Endothelial cell of umbilical vein (primary cell): ENCODE measurements at regions of chr6 and their contacts with region 1.

Region 1: DNA sequence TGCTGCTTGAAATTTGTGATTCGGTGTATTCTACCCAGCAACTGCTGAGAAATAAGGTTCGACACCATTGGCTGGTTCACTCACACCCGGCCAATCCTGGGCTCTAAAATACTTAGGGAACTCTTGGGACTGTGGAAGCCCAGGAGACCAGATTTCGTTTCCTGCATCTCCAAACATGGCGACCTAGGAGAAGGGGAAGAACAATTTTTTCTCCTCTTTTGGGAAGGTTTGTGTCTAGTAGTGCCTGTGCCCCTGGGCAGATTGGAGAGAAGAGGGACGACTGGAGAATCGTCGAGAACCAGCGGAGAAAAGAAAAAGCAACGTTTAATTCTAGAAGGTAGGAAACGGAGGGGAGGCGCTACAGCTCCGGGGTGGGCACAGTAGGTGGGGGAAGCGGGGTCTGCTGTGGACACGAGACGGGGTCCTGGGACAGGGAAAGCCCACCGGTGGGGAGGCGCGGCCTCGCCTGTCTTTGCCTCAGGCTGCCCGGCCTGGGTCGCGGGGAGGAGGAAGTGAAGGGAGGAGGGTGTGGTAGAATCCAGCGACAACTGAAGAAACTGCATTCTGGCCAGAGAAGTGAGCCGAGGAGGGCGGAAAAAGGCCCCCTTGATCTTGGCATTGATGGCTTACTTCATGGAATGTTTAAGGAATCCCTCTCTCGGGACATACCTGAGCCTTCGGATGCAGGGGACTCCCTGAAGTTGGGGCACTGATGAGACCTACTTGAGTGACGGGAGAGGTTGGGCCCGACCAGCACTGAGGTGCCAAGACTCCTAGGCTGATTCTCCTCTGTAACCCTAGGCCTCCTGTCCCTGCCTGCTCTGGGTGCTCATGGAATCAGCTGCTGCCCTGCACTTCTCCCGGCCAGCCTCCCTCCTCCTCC is at the start of gene BTN2A1:
- DNase-seq: peak; percentile 97
- H3K4me3 ChIP-seq: peak within 1 kb of the TSS; percentile 92 to 99 (median 99)
- H3K27ac ChIP-seq: peak within 1 kb of the TSS; percentile 92
- H3K4me1 ChIP-seq: peaks cover 20% of the 10 kb centered on the region
- H3K27me3 ChIP-seq: no peaks in the 10 kb centered on the region
- CTCF ChIP-seq: no peak
- POLR2A ChIP-seq: peak; percentile 18
- total RNA-seq, gene BTN2A1: 23.4 and 25.1 TPM in 2 replicates

Region 2: DNA sequence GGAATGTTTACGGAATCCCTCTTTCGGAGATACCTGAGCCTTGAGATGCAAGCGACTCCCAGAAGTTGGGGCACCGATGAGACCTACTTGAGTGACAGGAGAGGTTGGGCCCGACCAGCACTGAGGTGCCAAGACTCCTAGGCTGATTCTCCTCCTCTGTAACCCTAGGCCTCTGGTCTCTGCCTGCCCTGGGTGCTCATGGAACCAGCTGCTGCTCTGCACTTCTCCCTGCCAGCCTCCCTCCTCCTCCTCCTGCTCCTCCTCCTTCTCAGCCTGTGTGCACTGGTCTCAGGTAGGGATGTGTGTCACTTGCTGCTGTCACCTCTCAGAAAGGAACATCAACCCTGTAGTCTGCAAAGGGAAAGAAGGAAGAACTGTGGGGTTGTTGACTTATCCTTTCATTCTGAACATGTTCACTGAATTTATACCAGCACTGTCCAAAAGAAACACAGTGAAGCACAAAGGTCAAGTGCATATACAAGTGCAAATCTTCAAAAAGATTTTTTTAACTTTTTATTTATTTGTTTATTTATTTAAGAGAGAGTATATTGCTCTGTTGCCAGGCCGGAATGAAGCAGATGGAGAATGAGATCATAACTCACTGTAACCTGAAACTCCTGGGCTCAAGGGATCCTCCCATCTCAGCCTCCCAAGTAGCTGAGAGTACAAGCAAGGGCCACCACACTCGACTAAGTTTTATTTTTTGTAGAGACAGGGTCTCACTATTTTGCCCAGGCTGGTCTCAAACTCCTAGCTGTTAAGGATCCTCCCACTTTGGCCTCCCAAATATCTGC is 74.2 kb before region 1 on chr6:
- CTCF ChIA-PET with region 1: no interaction called
- POLR2A ChIA-PET with region 1: no interaction called
- dilution Hi-C with region 1: no loop called
- intact Hi-C with region 1: loop called (anchors 1 kb)
- DNase-seq: peak; percentile 41
- H3K4me3 ChIP-seq: peak overlapping the region; percentile 59 to 87 (median 67)
- H3K27ac ChIP-seq: peak overlapping the region; percentile 56
- H3K4me1 ChIP-seq: peaks cover 7% of the 10 kb centered on the region
- H3K27me3 ChIP-seq: no peaks in the 10 kb centered on the region
- CTCF ChIP-seq: no peak
- POLR2A ChIP-seq: no peak

Region 3: DNA sequence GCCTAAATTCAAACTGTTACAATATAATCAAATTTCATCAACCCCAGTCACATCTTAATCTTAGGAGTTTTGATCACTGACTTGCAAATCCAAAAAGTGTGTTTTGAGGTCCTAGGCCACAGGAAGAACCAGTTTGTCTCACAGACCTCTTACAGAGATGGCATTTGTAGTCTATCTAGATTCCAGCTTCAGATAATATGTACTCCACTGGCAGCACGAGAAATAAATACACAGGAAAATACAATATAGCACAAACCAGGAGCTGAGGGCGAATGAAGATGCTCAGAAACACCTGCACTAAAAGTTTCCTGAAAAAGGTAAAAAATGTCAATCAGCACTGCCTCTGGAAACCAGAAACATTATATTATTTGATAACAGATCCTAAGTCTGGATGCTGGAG is 18.4 kb before region 1 on chr6:
- CTCF ChIA-PET with region 1: no interaction called
- POLR2A ChIA-PET with region 1: no interaction called
- dilution Hi-C with region 1: no loop called
- intact Hi-C with region 1: loop called (anchors 1 kb)
- DNase-seq: no peak
- H3K4me3 ChIP-seq: peak overlapping the region; percentile 58 to 97 (median 96)
- H3K27ac ChIP-seq: no peak overlapping the region
- H3K4me1 ChIP-seq: peaks cover 10% of the 10 kb centered on the region
- H3K27me3 ChIP-seq: no peaks in the 10 kb centered on the region
- CTCF ChIP-seq: no peak
- POLR2A ChIP-seq: no peak

Region 4: GRCh38 chr6:26520853-26521599 is 63.0 kb after region 1 on chr6:
- CTCF ChIA-PET with region 1: no interaction called
- POLR2A ChIA-PET with region 1: no interaction called
- dilution Hi-C with region 1: no loop called
- intact Hi-C with region 1: loop called (anchors 2 kb)
- DNase-seq: peak; percentile 88
- H3K4me3 ChIP-seq: peak overlapping the region; percentile 46 to 82 (median 79)
- H3K27ac ChIP-seq: peak overlapping the region; percentile 76
- H3K4me1 ChIP-seq: peaks cover 10% of the 10 kb centered on the region
- H3K27me3 ChIP-seq: no peaks in the 10 kb centered on the region
- CTCF ChIP-seq: no peak
- POLR2A ChIP-seq: peak; percentile 68

Region 5: GRCh38 chr6:27078734-27079357 is 620.8 kb after region 1 on chr6:
- CTCF ChIA-PET with region 1: no interaction called
- POLR2A ChIA-PET with region 1: no interaction called
- dilution Hi-C with region 1: no loop called
- intact Hi-C with region 1: no loop called
- DNase-seq: peak; percentile 71
- H3K4me3 ChIP-seq: no peak overlapping the region
- H3K27ac ChIP-seq: no peak overlapping the region
- H3K4me1 ChIP-seq: peaks cover 2% of the 10 kb centered on the region
- H3K27me3 ChIP-seq: peaks cover 6 to 16% of the 10 kb centered on the region in 2 experiments
- CTCF ChIP-seq: peak; percentile 48 to 49
- POLR2A ChIP-seq: no peak